Vagina (tissue), 2 donors: ENCODE measurements at regions of chr15 and their contacts with region 1.

Region 1: GRCh38 chr15:81480645-81481053 is 106.6 kb upstream of the TMC3 start:
- DNase-seq: no peak
- H3K4me3 ChIP-seq: no peak overlapping the region
- H3K27ac ChIP-seq: no peak overlapping the region
- H3K4me1 ChIP-seq: no peaks in the 10 kb centered on the region
- H3K27me3 ChIP-seq: no peaks in the 10 kb centered on the region
- CTCF ChIP-seq: peak; percentile 71 to 89 (median 88)
- POLR2A ChIP-seq: no peak

Region 2: DNA sequence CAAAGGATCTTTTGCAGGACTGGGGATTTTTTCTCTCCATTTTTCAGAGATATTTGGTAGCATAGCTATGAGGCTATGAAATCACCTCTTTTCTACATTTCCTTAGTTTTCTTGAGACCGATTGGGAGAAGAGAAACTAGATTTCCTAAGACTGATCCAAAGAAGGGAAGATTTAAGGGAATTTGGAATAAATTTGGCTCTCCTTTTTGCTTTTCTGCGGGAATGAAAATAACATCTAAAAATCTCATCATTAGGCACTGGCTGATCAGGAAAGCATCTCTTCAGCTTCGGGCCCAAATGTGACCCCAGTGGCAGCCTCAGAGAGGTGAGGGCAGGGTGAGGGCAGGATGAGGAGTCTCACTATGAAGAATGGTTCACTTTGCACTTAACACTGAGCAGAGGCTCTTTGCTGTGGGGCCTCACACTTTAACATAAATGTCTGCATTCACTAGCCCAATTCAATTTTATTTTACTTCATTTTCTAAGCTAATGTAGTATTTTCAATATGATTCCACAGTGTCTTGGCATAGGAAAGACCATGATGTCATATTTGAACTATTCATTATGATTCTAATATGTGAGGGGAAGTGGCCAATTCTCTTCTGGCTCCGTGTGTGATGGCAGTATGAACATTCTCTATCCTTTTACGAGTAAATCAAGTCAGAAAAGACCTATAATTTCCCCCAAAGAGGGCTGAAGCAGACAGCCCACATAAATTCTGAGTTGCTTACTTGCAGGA is 371.9 kb after region 1 on chr15:
- intact Hi-C with region 1: no loop called
- DNase-seq: no peak
- H3K4me3 ChIP-seq: no peak overlapping the region
- H3K27ac ChIP-seq: no peak overlapping the region
- H3K4me1 ChIP-seq: no peaks in the 10 kb centered on the region
- H3K27me3 ChIP-seq: no peaks in the 10 kb centered on the region
- CTCF ChIP-seq: no peak
- POLR2A ChIP-seq: no peak

Region 3: DNA sequence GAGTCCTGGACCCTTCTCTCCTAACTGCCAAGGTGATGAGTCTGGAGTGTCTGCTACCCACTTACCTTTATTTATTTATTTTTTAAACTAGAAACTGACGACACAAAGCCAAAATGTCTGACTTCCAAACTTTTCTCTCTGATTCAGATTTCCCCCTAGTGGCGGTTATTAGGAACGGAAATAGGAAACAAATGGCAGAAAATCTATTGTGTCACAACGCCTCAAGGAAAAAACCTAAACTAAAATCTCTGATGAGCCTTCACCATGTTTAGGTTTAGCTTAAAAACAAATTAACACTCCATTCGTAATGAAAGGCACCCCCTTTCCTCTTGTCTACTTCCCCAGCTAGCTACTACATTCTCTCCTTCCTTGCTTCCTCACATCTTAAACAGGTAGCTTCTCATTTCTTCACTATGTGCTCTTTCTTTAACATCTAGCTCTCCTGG is 659.2 kb after region 1 on chr15:
- intact Hi-C with region 1: loop called (anchors 5 kb)
- DNase-seq: no peak
- H3K4me3 ChIP-seq: no peak overlapping the region
- H3K27ac ChIP-seq: no peak overlapping the region
- H3K4me1 ChIP-seq: no peaks in the 10 kb centered on the region
- H3K27me3 ChIP-seq: no peaks in the 10 kb centered on the region
- CTCF ChIP-seq: peak; percentile 32 to 61 (median 60)
- POLR2A ChIP-seq: no peak

Region 4: DNA sequence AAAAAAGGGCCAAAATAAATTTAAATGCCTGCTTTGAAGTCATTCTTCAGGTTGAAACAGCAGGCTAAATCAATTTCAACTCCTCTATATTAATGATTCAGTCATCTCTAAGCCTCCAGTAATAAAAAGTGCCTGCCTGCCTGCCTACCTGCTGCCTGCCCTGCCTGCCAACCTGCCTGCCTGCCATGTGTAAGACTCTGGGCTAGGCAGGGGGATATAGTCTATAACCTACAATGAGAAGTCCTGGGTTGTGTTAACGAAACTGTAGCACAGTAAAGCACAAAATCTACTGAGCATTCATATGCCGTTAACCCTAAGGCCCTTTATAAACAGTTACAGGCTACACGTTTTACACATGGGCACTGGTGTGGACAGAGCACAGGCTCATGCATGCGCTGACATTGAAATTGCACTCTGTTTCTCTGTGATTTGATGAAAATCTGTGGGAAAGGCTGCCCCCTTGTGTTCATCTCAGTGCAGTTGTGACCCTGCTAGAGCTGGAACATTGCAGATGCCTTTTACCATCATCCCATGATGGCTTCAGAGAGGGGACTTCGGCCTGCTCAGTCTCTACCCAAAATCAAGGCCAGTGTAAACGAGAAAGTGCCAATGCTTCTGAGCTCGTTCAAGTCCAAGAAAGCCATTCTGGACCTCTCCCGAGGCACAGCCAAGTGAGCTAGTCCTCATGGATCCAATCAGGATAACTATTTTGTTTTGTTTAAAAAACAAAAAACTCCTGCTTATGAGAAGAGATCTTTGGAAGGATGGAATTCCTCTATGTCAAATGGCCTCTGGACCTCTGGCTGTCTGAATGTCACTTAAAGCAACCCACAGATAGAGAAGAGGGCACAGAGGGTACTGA is 717.3 kb after region 1 on chr15:
- intact Hi-C with region 1: loop called (anchors 10 kb)
- DNase-seq: no peak
- H3K4me3 ChIP-seq: no peak overlapping the region
- H3K27ac ChIP-seq: no peak overlapping the region
- H3K4me1 ChIP-seq: no peaks in the 10 kb centered on the region
- H3K27me3 ChIP-seq: no peaks in the 10 kb centered on the region
- CTCF ChIP-seq: peak; percentile 45 to 67 (median 50)
- POLR2A ChIP-seq: no peak